ENCODE measurements at regions of chr6 and their contacts with region 1.

Region 1: DNA sequence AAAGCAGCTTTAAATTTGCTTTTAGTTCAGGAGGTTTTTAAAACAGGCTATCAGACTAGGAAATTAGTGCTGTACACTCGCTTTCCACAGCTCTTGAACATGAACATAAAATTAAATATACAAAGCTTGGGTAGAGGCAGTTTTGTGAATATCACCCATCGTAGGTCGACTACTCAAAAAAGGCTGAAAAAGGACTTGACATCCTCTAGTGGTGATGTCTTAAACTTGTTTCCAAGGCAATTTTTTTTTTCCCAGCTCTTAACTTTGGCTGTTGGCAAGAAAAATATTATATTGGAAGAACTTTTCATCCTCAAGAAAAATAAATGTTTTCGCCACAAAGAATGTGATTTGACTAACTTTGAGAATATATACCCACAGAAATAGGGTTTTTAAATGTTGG is 2.9 kb downstream of the MAP7 start:
- DNase-seq: no peak
- H3K4me3 Mint-ChIP-seq: no peak overlapping the region
- H3K27ac Mint-ChIP-seq: no peak overlapping the region
- H3K4me1 Mint-ChIP-seq: peaks cover 4% of the 10 kb centered on the region
- H3K27me3 Mint-ChIP-seq: peaks cover 68% of the 10 kb centered on the region

Region 2: DNA sequence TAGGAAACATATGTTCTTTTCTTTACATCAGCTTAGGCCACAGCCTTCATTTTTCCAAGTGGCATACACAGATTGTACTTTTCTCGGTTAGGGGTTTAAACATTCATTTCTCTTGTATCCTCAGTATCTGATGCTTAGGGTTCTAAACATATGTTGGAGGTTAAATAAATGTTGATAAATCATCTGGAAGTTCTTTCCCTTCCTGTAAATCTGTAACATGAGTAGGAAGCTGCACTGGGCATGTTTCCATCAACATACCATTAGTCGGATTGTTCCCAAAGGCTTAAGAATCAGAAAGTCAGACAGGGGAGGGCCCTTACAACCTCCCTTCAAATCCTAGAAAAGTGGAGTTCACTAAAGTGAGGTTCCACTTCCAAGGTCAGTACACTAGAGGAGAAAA is 202.9 kb before region 1 on chr6:
- intact Hi-C with region 1: loop called (anchors 10 kb)
- DNase-seq: no peak
- H3K4me3 Mint-ChIP-seq: no peak overlapping the region
- H3K27ac Mint-ChIP-seq: no peak overlapping the region
- H3K4me1 Mint-ChIP-seq: no peaks in the 10 kb centered on the region
- H3K27me3 Mint-ChIP-seq: peaks cover 12% of the 10 kb centered on the region

Region 3: GRCh38 chr6:137155830-137156229 is 608.5 kb after region 1 on chr6:
- intact Hi-C with region 1: no loop called
- DNase-seq: peak; percentile 90
- H3K4me3 Mint-ChIP-seq: peak overlapping the region; percentile 66
- H3K27ac Mint-ChIP-seq: peak overlapping the region; percentile 73
- H3K4me1 Mint-ChIP-seq: peaks cover 24% of the 10 kb centered on the region
- H3K27me3 Mint-ChIP-seq: peaks cover 2% of the 10 kb centered on the region

Region 4: GRCh38 chr6:137873273-137873762 is 1326.0 kb after region 1 on chr6:
- intact Hi-C with region 1: no loop called
- DNase-seq: peak; percentile 89
- H3K4me3 Mint-ChIP-seq: peak overlapping the region; percentile 87
- H3K27ac Mint-ChIP-seq: peak overlapping the region; percentile 86
- H3K4me1 Mint-ChIP-seq: peaks cover 44% of the 10 kb centered on the region
- H3K27me3 Mint-ChIP-seq: no peaks in the 10 kb centered on the region

Measured in activated CD4-positive, alpha-beta T cell treated with anti-CD3 and anti-CD28 coated beads, Interleukin-2, amount 10 ng/mL, durations not matched to agents 24 days and 14 days (primary cell).